Activated CD4-positive, alpha-beta T cell treated with anti-CD3 and anti-CD28 coated beads for 36 hours (primary cell): ENCODE measurements at regions of chr5 and their contacts with region 1.

Region 1: GRCh38 chr5:139968547-139969261 is 74.4 kb downstream of the NRG2 start:
- DNase-seq: peak; percentile 95
- ATAC-seq: peak; percentile 100
- H3K4me3 Mint-ChIP-seq: no peak overlapping the region
- H3K27ac Mint-ChIP-seq: no peak overlapping the region
- H3K4me1 Mint-ChIP-seq: no peaks in the 10 kb centered on the region
- H3K27me3 Mint-ChIP-seq: peaks cover 17% of the 10 kb centered on the region

Region 2: DNA sequence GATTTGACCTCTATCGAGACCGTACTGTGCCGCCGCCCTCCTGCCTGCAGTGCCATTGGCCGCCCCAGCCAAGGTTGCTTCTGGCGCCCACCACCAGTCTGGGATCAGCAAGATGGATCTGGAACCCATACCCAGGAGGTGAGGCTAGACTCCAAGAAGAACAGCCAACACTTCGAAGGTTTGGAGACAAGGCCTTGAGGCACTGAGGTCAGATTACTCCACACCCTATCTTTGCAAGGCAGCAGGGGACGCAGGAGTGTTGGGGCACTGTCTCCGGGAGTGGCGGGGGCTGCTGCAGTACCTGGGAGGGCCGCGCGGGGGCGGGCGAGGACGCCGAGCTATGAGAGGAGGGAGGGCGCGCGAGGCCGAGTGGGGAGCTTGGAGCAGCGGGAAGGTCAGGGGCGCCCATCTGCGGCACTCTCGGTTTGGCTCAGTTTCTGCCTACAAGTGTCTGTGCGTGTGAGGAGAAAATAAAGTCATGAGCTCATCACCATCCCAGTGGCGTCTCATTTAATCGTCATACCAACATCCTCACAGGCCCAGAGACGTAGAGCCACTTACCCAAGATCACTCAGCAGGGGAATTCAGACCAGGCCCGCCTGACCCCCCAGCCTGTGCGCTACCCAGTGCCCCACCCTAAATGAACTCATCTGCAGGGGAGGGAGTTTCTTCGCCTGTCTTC is 193.6 kb before region 1 on chr5:
- CTCF ChIA-PET with region 1: interaction called, 36 read pairs
- POLR2A ChIA-PET with region 1: interaction called, 3 read pairs
- intact Hi-C with region 1: loop called in 1 of 2 experiments (anchors 1 kb)
- DNase-seq: peak; percentile 92
- ATAC-seq: peak; percentile 95
- H3K4me3 Mint-ChIP-seq: no peak overlapping the region
- H3K27ac Mint-ChIP-seq: peak overlapping the region; percentile 58
- H3K4me1 Mint-ChIP-seq: peaks cover 10% of the 10 kb centered on the region
- H3K27me3 Mint-ChIP-seq: peaks cover 9% of the 10 kb centered on the region

Region 3: DNA sequence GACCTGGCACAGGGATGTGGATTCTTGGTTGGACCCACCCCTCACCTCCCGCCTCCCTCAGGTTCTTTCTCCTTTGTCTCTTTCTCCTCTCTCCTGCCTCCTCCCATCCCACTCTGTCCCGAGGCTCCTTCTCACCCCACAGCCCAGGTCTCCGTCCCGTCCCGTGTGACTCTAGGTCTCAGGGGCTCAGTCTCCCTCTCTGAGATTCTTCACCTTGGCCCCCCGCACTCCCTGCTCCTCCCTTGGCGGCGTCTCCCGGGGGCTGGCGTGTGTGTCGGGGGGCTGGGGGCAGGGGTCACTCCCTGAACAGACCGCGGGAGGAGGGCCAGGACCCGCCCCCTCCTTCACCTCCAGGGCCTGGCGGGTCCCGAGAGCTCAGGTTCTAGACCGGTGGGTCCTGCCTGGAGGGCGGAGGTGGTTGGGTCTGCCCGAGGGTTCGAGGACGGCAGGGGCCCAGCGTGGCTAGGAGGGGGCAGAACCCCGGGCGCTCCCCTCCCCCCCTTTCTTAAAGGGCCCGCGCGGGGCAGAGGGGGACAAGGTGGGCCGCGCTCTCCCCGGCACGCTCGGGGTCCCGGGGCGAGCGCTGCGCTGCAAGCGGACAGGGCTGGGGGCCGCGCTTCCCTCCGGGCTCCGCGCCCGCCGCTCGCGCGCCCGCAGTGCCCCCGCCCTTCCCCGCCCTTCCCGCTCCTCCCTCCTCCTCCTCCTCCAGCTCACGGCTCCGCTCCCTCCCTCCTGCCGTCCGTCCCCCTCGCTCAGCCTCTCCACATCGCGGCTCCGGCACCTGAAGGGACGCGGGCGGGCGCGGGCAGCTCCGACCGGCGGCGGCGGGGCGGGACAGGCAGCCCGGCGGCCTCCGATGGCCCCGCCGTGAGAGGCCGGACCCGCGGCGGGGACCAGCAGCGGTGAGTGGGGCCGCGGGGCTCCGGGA is 173.4 kb before region 1 on chr5 and contains the start of gene PSD2:
- CTCF ChIA-PET with region 1: interaction called, 27 read pairs
- POLR2A ChIA-PET with region 1: no interaction called
- intact Hi-C with region 1: no loop called
- DNase-seq: peak; percentile 44
- ATAC-seq: peak; percentile 56
- H3K4me3 Mint-ChIP-seq: no peak within 1 kb of the TSS
- H3K27ac Mint-ChIP-seq: no peak within 1 kb of the TSS
- H3K4me1 Mint-ChIP-seq: peaks cover 2% of the 10 kb centered on the region
- H3K27me3 Mint-ChIP-seq: peaks cover 52% of the 10 kb centered on the region
- total RNA-seq, gene PSD2: not detected

Region 4: DNA sequence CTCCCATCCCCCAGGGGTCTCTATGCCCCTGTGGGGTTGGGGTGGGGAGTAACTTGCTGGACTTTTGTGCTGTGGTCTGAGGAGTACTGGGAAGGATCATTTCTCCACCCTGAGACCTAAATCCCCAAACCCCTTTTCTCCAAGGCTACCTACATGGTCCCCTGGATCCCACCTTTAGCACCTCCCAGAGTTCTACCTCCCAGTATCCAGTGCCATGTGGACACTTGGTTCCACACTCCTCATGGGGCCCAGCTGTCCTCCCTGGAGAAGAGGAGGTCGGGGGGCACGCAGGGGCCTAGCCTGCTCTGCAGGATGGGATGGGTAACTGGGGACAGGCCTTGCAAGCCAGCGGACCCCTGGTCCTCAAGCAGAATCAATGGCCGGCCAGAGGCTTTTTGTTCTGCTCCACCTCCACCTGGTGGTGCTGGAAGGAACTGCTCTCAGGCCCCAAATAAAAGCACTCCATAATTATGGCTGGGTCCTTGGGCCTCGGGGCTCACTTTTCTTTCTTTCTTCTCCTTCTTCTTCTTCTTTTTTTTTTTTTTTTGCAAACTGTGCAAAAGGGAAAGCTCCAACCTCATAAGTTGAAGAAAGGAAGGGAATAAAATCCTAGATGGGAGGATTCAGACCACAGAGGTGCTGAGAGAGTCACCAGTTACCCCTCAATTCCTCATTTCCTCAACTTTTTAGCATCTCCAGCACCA is 104.7 kb before region 1 on chr5:
- CTCF ChIA-PET with region 1: interaction called, 20 read pairs
- POLR2A ChIA-PET with region 1: no interaction called
- intact Hi-C with region 1: loop called in 1 of 2 experiments (anchors 1 kb)
- DNase-seq: peak; percentile 75
- ATAC-seq: peak; percentile 68
- H3K4me3 Mint-ChIP-seq: no peak overlapping the region
- H3K27ac Mint-ChIP-seq: no peak overlapping the region
- H3K4me1 Mint-ChIP-seq: no peaks in the 10 kb centered on the region
- H3K27me3 Mint-ChIP-seq: peaks cover 12% of the 10 kb centered on the region

Region 5: GRCh38 chr5:139942243-139942642 is 26.5 kb before region 1 on chr5:
- CTCF ChIA-PET with region 1: interaction called, 14 read pairs
- POLR2A ChIA-PET with region 1: no interaction called
- intact Hi-C with region 1: no loop called
- DNase-seq: no peak
- ATAC-seq: no peak
- H3K4me3 Mint-ChIP-seq: no peak overlapping the region
- H3K27ac Mint-ChIP-seq: no peak overlapping the region
- H3K4me1 Mint-ChIP-seq: no peaks in the 10 kb centered on the region
- H3K27me3 Mint-ChIP-seq: peaks cover 43% of the 10 kb centered on the region

Region 6: GRCh38 chr5:139955053-139955605 is 13.6 kb before region 1 on chr5:
- CTCF ChIA-PET with region 1: interaction called, 45 read pairs
- POLR2A ChIA-PET with region 1: no interaction called
- intact Hi-C with region 1: no loop called
- DNase-seq: no peak
- ATAC-seq: no peak
- H3K4me3 Mint-ChIP-seq: no peak overlapping the region
- H3K27ac Mint-ChIP-seq: no peak overlapping the region
- H3K4me1 Mint-ChIP-seq: no peaks in the 10 kb centered on the region
- H3K27me3 Mint-ChIP-seq: peaks cover 5% of the 10 kb centered on the region

Region 7: DNA sequence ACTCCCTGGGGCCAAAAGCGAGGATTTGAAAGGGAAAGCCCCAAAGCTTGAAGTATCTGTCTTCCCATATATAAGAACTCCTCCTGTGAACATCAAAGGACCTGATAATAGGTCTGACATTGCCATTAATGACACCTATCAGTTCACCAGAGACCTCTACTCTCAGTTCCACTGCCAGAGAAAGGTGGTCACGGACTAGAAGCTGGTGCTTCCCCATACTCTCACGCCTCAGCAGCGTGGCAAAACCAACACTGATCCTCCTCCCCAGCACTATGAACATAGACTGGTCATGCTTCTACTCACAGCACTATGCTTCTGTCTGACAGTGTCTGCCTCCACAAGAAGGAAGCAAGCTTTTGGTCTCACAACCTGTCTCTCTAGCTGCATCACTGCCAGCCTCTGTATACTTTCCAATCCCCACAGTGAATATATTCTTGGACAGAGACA is 36.5 kb after region 1 on chr5:
- CTCF ChIA-PET with region 1: interaction called, 14 read pairs
- POLR2A ChIA-PET with region 1: no interaction called
- intact Hi-C with region 1: no loop called
- DNase-seq: no peak
- ATAC-seq: no peak
- H3K4me3 Mint-ChIP-seq: no peak overlapping the region
- H3K27ac Mint-ChIP-seq: no peak overlapping the region
- H3K4me1 Mint-ChIP-seq: no peaks in the 10 kb centered on the region
- H3K27me3 Mint-ChIP-seq: peaks cover 33% of the 10 kb centered on the region

Region 8: GRCh38 chr5:140357726-140358093 is 389.0 kb after region 1 on chr5:
- CTCF ChIA-PET with region 1: no interaction called
- POLR2A ChIA-PET with region 1: no interaction called
- intact Hi-C with region 1: no loop called
- DNase-seq: peak; percentile 89
- ATAC-seq: peak; percentile 98
- H3K4me3 Mint-ChIP-seq: peak overlapping the region; percentile 48
- H3K27ac Mint-ChIP-seq: peak overlapping the region; percentile 44
- H3K4me1 Mint-ChIP-seq: peaks cover 12% of the 10 kb centered on the region
- H3K27me3 Mint-ChIP-seq: peaks cover 8% of the 10 kb centered on the region